ENCODE measurements at regions of chr1 and their contacts with region 1.

Region 1: DNA sequence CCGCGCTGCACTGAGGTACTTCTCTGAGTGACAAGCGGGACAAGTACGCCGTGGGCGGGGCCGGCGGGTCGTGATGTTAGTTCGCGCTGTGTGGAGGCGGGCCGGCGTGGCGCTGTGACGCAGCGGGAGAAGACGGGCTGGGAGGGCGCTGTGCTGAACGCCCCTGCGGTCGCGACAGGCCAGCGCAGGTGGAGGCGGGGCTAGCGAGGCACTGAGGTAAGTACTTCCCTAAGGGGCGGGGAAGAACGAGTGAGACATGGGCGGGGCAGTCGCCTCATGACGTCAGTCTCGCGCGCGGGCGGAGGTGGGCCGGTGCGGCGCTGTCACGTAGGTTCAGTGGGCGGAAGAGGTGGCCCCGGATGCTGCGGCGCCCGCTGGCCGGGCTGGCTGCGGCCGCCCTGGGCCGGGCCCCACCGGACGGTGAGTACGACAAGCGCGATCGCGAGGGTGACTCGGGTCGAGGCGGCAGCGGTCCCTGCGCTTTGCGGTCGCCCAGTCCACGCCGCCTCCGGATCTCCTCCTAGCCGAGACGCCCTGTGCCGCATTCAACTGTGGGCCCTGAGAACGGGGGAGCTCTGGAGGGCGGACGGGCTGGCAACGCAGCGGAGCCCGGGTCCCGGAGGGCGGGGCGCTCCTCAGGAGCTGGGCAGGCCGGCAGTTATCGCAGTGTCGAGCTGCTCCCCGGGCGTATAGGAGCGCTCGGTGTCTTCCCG is at the start of gene GUK1:
- DNase-seq: peak; percentile 100
- H3K4me3 ChIP-seq: peak within 1 kb of the TSS; percentile 72 to 97 (median 76)
- H3K4me3 Mint-ChIP-seq: peak within 1 kb of the TSS; percentile 93 to 94
- H3K27ac ChIP-seq: peak within 1 kb of the TSS; percentile 90 to 92
- H3K27ac Mint-ChIP-seq: peak within 1 kb of the TSS; percentile 96 to 99 (median 99)
- H3K4me1 ChIP-seq: peaks cover 32 to 45% of the 10 kb centered on the region in 2 donors
- H3K4me1 Mint-ChIP-seq: peaks cover 53% of the 10 kb centered on the region
- H3K27me3 ChIP-seq: no peaks in the 10 kb centered on the region
- H3K27me3 Mint-ChIP-seq: peaks cover 1 to 6% (median 2%) of the 10 kb centered on the region in 3 donors
- CTCF ChIP-seq: no peak
- polyA plus RNA-seq, gene GUK1: 262 to 391 (median 316) TPM

Region 2: DNA sequence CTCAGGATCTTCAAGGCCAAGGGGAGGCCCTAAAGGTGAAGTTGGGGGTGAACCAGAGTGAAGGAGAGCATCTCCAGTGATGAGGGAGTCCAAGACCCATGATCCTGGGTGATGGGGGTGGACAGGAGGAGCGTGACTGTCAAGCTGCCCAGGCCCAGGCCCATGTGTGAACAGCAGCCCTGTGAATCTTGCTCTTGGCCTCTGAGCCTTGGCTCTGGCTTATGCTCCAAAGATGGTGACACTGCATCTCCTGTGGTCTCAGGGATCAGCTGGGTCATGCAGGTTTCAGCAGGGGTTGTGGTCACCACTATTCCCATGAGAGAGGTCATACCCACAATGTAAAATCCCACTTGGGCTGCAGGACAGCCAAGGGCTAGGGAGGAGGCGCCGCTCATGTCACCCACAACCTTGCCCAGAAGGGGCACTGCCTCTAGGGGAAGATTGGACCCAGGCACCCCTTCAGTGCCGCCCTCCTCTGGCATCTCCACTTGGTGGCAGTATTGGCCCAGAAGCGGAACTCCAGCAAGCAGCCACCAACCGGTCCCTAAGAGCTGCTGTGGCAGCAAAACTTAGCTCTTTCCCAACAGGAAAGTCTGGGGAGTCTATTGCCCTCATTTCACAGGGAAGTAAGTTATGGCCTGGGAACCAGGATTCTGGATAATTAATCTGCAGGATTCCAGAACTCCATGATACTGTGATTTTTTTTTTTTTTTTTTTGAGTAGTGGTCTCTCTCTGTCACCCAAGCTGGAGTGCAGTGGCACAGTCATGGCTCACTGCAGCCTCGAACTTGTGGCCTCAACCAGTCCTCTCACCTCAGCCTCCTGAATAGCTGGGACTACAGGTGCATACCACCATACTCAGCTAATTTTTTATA is 140.8 kb before region 1 on chr1:
- intact Hi-C with region 1: loop called in 1 of 2 experiments (anchors 10 kb)
- DNase-seq: peak; percentile 63 to 70 (median 69)
- H3K4me3 ChIP-seq: no peak overlapping the region
- H3K4me3 Mint-ChIP-seq: no peak overlapping the region
- H3K27ac ChIP-seq: no peak overlapping the region
- H3K27ac Mint-ChIP-seq: no peak overlapping the region
- H3K4me1 ChIP-seq: no peaks in the 10 kb centered on the region
- H3K4me1 Mint-ChIP-seq: no peaks in the 10 kb centered on the region
- H3K27me3 ChIP-seq: peaks cover 0 to 5% of the 10 kb centered on the region in 2 donors
- H3K27me3 Mint-ChIP-seq: peaks cover 11 to 27% (median 16%) of the 10 kb centered on the region in 3 donors
- CTCF ChIP-seq: peak; percentile 86

Region 3: DNA sequence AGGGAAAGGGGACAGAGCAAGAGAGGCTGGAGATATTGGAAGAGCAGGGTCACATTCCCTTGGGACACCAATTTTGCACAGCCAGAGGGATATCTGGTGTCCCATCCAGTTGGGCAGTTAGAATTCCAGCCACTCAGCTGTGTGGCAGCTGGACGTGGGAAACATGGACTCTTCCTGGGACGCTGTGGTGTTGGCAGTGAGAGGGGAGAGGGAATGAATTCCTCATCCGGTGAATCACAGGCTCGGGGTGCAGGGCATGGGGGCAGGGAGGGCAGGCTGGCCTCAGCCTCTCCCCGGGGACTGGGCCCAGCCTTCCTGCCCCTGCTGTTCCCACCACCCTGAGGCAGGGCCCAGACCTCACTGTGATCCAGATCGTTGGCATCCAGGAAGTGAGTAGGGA is 124.8 kb before region 1 on chr1:
- intact Hi-C with region 1: no loop called
- DNase-seq: no peak
- H3K4me3 ChIP-seq: no peak overlapping the region
- H3K4me3 Mint-ChIP-seq: no peak overlapping the region
- H3K27ac ChIP-seq: no peak overlapping the region
- H3K27ac Mint-ChIP-seq: peak overlapping the region in 1 of 7 donors; percentile 42
- H3K4me1 ChIP-seq: no peaks in the 10 kb centered on the region
- H3K4me1 Mint-ChIP-seq: no peaks in the 10 kb centered on the region
- H3K27me3 ChIP-seq: no peaks in the 10 kb centered on the region
- H3K27me3 Mint-ChIP-seq: peaks cover 2 to 11% (median 5%) of the 10 kb centered on the region in 3 donors
- CTCF ChIP-seq: no peak

Region 4: DNA sequence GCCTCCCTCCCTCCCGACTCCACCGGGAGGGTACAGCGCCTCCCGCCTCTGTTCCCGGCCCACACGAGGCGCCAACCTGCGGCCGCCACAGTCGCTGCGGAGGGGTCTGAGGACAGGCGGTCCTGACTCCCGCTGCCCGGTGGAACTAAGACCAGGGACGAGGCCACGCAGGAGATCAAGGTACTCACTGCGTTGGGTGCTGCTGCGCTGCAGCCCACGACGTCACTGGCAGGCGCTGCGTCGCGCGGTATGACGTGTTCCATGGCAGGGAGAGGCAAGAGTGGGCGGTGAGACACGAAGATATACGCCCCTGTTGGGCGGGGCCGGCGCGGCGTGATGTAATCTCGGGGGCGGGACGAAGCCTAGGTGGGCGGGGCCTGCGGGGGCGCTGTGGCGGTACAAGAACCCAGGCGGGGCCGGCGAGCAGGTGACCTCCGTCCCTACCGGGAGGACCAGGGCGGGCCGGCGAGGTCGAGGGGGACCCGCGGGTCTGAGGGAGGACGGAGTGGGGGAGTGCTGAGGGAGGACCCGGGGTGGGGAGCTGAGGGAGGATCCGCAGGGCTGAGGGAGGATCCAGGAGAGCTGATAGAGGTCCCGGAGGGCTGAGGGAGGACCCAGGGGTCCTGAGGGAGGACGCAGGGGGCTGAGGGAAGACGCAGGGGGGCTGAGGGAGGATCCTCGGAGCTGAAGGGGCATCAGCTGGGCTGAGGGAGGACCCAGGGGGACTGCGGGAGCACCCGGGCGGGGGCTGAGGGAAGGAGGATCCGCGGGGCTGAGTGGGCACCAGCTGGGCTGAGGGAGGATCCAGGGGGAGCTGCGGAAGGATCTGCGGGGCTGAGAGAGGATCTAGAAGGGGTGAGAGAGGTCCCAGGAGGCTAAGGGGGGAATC is 30.8 kb before region 1 on chr1 and contains the start of gene MRPL55:
- intact Hi-C with region 1: loop called (anchors 1 to 5 kb)
- DNase-seq: peak; percentile 94 to 98 (median 97)
- H3K4me3 ChIP-seq: peak within 1 kb of the TSS; percentile 83 to 92 (median 91)
- H3K4me3 Mint-ChIP-seq: peak within 1 kb of the TSS; percentile 90 to 92
- H3K27ac ChIP-seq: peak within 1 kb of the TSS; percentile 81 to 98
- H3K27ac Mint-ChIP-seq: peak within 1 kb of the TSS; percentile 89 to 97 (median 95)
- H3K4me1 ChIP-seq: peaks cover 25 to 42% of the 10 kb centered on the region in 2 donors
- H3K4me1 Mint-ChIP-seq: peaks cover 37% of the 10 kb centered on the region
- H3K27me3 ChIP-seq: no peaks in the 10 kb centered on the region
- H3K27me3 Mint-ChIP-seq: no peaks in the 10 kb centered on the region
- CTCF ChIP-seq: no peak
- polyA plus RNA-seq, gene MRPL55: 99.8 to 277 (median 104) TPM

Region 5: GRCh38 chr1:228165372-228166169 is 25.5 kb after region 1 on chr1 and contains the start of gene IBA57:
- intact Hi-C with region 1: loop called (anchors 1 to 2 kb)
- DNase-seq: peak; percentile 97 to 100 (median 100)
- H3K4me3 ChIP-seq: peak within 1 kb of the TSS; percentile 59 to 75 (median 69)
- H3K4me3 Mint-ChIP-seq: peak within 1 kb of the TSS; percentile 77 to 92
- H3K27ac ChIP-seq: peak within 1 kb of the TSS; percentile 97 to 99
- H3K27ac Mint-ChIP-seq: peak within 1 kb of the TSS; percentile 97 to 99 (median 99)
- H3K4me1 ChIP-seq: peaks cover 30 to 35% of the 10 kb centered on the region in 2 donors
- H3K4me1 Mint-ChIP-seq: peaks cover 43% of the 10 kb centered on the region
- H3K27me3 ChIP-seq: peaks cover 0 to 16% of the 10 kb centered on the region in 2 donors
- H3K27me3 Mint-ChIP-seq: peaks cover 2 to 28% (median 11%) of the 10 kb centered on the region in 3 donors
- CTCF ChIP-seq: peak; percentile 78
- polyA plus RNA-seq, gene IBA57: 1.6 to 2.1 (median 1.7) TPM

Region 6: DNA sequence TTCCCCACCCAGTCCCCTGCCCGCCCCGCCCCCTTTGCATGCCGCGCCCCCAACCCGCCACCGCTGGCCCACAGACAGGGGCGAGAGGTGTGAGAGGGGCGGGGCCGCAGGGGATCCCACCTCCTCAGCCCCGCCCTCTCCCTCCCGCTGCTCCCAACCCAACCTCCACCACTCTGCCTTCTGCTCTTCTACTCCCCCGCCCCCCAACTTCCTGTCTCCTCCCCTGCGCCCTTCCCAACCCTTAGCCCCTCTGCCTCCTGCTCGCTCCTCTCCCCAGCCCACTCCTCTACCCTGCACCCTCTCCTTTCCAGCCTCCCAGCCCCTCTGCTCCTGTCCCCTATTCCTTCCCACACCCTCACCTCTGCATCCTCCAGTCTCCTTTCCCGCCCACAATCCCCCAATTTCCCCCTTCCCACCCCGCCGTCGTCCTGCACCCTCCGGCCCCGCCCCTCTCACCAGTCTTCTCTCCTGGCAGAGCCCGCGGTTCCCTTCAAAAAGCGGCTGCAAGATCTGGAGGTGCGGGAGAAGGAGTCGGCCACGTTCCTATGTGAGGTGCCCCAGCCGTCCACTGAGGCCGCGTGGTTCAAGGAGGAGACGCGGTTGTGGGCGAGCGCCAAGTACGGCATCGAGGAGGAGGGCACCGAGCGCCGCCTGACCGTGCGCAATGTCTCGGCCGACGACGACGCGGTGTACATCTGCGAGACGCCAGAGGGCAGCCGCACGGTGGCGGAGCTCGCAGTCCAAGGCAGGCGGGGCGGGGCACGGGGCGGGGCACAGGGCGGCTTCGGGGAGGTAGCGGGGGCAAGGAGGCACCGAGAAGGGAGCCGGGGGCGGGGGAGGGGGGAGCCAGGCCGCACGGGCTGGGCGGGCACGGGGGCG is 73.1 kb after region 1 on chr1:
- intact Hi-C with region 1: loop called in 1 of 2 experiments (anchors 10 kb)
- DNase-seq: peak; percentile 76 to 81 (median 80)
- H3K4me3 ChIP-seq: peak overlapping the region; percentile 7 to 70 (median 33)
- H3K4me3 Mint-ChIP-seq: peak overlapping the region; percentile 75 to 88
- H3K27ac ChIP-seq: no peak overlapping the region
- H3K27ac Mint-ChIP-seq: peak overlapping the region in 1 of 7 donors; percentile 32
- H3K4me1 ChIP-seq: peaks cover 6 to 16% of the 10 kb centered on the region in 2 donors
- H3K4me1 Mint-ChIP-seq: peaks cover 6% of the 10 kb centered on the region
- H3K27me3 ChIP-seq: peaks cover 0 to 10% of the 10 kb centered on the region in 2 donors
- H3K27me3 Mint-ChIP-seq: peaks cover 9 to 25% (median 24%) of the 10 kb centered on the region in 3 donors
- CTCF ChIP-seq: peak; percentile 16

Region 7: DNA sequence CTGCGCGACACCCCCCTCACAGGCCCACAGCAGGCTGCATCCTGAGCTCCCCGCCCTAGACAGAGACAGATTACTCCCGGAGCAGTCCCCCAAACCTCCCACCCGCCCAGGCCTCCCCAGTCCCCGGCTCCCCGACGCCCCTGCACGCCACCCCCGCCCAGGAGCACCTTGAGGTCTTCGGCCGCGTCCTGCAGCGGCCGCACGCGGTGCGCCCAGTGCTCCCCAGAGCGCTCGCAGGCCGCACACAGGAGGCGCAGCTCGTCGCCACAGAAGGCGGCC is 265.8 kb after region 1 on chr1:
- intact Hi-C with region 1: loop called (anchors 10 kb)
- DNase-seq: no peak
- H3K4me3 ChIP-seq: peak overlapping the region; percentile 58 to 95 (median 75)
- H3K4me3 Mint-ChIP-seq: peak overlapping the region; percentile 89 to 93
- H3K27ac ChIP-seq: peak overlapping the region in 1 of 2 donors; percentile 89
- H3K27ac Mint-ChIP-seq: peak overlapping the region in 5 of 7 donors; percentile 48 to 93 (median 86)
- H3K4me1 ChIP-seq: peaks cover 31 to 43% of the 10 kb centered on the region in 2 donors
- H3K4me1 Mint-ChIP-seq: peaks cover 66% of the 10 kb centered on the region
- H3K27me3 ChIP-seq: no peaks in the 10 kb centered on the region
- H3K27me3 Mint-ChIP-seq: no peaks in the 10 kb centered on the region
- CTCF ChIP-seq: no peak

Region 8: DNA sequence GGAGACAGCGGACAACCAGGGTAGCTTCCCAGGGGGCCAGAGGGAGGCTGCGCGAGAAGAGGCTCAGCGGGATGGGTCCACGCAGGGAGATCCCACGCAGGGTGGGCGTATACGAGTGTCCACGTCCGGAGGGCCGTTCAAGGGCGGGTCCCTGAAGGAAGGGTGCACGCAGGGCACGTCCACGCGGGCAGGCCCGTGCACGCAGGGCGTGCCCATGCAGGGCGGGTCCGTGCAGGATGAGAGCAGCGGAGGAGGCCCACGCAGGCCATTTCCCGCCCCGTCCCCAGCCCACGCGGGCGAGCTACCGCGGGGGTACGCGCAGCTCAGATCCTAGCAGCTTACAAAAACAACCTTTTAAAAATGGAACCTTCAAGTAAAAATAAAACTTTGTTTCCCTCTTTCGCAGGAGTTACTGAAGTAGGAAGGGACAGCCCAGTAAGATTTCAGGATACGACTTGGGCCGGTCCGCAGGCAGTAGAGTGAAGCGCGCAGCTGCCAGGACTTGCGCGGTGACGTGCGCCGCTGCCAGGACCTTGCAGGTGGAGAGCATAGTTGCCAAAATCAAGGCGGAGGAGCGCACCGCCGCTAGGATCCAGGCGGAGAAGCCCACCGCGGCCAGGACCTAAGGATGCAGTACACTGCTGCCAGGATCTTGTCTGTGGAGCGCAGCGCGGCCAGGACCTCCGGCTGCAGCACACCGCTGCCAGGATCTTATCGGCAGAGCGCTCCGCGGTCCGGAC is 346.7 kb after region 1 on chr1:
- intact Hi-C with region 1: loop called in 1 of 2 experiments (anchors 10 kb)
- DNase-seq: peak; percentile 59 to 85 (median 70)
- H3K4me3 ChIP-seq: peak overlapping the region; percentile 67 to 84 (median 82)
- H3K4me3 Mint-ChIP-seq: peak overlapping the region; percentile 87 to 94
- H3K27ac ChIP-seq: peak overlapping the region; percentile 97 to 99
- H3K27ac Mint-ChIP-seq: peak overlapping the region; percentile 99 to 100 (median 100)
- H3K4me1 ChIP-seq: peaks cover 30 to 44% of the 10 kb centered on the region in 2 donors
- H3K4me1 Mint-ChIP-seq: peaks cover 37% of the 10 kb centered on the region
- H3K27me3 ChIP-seq: no peaks in the 10 kb centered on the region
- H3K27me3 Mint-ChIP-seq: peaks cover 2 to 12% (median 8%) of the 10 kb centered on the region in 3 donors
- CTCF ChIP-seq: no peak

Measured in CD14-positive monocyte (primary cell).